Astrocyte of the cerebellum (primary cell): ENCODE measurements at regions of chr12 and their contacts with region 1.

Region 1: DNA sequence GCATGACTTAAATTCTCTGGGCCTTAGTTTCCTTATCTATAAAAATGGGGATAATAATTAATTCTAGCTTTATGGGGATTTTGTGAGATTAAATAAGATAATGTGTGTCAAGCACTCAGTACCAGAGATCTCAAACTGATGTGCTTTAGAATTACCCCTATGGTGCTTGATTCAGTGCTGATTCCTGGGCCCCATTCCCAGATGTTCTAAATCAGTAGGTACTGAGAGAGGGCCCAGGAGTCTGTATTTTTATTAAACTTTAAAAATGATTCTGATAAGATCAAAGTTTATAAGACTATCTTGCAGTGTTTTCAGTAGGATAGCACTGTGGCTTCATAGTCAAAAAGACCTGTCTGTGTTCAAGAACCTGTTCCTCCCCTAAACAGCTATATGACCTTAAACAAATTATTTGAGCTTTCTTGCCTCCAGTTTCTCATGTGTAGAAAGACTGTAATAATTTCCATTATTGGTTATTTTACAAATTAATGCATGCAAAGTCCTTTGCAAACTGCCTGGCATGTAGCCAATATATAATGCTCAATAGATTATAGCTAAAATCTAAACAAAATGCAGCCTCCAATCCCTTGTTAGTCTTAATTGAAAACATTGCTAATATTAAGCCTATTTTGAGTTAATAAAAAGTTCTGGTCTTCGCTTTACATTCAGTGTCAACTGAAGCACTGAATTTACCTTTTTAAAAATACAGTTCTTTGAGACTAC is 88.9 kb upstream of the RIC8B start:
- DNase-seq: no peak
- H3K4me3 ChIP-seq: no peak overlapping the region
- CTCF ChIP-seq: no peak

Region 2: GRCh38 chr12:106651552-106651951 is 34.0 kb before region 1 on chr12:
- in situ Hi-C with region 1: loop called (anchors 5 kb)
- DNase-seq: no peak
- H3K4me3 ChIP-seq: no peak overlapping the region
- CTCF ChIP-seq: no peak